ENCODE measurements at regions of chr10 and their contacts with region 1.

Region 1: GRCh38 chr10:100743626-100744135 is 1.7 kb upstream of the PAX2 start:
- DNase-seq: peak; percentile 82
- H3K4me3 Mint-ChIP-seq: no peak overlapping the region
- H3K27ac Mint-ChIP-seq: peak overlapping the region; percentile 41
- H3K4me1 Mint-ChIP-seq: peaks cover 16% of the 10 kb centered on the region
- H3K27me3 Mint-ChIP-seq: peaks cover 84% of the 10 kb centered on the region

Region 2: DNA sequence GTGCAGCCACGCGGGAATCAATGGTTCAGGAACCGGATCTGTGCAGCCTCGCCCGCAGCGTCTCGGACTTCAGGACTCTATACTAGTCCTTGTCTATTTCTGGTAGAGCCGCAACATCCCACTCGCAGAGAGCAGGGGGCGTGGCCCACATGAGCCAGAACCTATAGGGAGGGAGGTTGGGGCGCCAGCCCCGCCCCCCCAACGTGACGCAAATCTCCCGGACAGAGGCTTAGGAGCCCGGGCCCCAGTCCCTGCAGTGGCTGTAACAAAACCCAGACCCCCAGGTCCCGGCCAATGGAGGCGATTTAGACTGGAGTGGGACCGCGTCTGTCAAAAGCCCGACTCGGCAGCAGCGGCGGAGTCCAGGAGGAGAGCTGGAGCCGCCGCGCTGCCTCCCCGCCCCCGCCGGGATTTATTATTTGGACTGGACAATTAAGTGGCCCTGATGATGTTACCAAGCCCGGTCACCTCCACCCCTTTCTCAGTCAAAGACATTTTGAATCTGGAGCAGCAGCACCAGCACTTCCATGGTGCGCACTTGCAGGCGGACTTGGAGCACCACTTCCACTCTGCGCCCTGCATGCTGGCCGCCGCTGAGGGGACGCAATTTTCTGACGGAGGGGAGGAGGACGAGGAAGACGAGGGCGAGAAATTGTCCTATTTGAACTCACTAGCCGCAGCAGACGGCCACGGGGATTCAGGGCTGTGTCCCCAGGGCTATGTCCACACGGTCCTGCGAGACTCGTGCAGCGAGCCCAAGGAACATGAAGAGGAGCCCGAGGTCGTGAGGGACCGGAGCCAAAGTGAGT is 1210.8 kb before region 1 on chr10 and contains the start of gene NKX2-3:
- intact Hi-C with region 1: loop called (anchors 5 kb)
- DNase-seq: peak; percentile 71
- H3K4me3 Mint-ChIP-seq: peak within 1 kb of the TSS; percentile 21
- H3K27ac Mint-ChIP-seq: no peak within 1 kb of the TSS
- H3K4me1 Mint-ChIP-seq: peaks cover 24% of the 10 kb centered on the region
- H3K27me3 Mint-ChIP-seq: peaks cover 89% of the 10 kb centered on the region
- total RNA-seq, gene NKX2-3: not detected in 2 replicates

Region 3: DNA sequence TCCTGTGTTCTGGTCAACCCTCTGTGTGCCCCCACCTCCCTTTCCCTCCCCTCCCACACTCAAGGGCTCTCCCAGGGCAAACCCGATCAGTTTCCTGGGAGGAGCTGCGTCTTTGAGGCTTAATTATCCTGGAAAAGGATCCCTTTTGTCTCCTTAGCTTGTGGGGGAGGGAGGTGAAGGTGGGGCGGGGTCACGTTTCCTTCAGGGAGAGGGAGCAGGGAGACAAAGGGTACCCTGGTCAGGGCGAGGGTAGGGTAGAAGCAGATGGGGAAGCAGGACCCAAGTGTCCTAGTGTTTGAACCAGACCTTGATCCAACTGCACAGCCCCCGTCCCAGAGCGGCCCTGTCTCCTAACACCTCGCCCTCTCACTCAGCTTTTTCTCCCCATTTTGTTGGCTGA is 117.9 kb before region 1 on chr10:
- intact Hi-C with region 1: no loop called
- DNase-seq: no peak
- H3K4me3 Mint-ChIP-seq: no peak overlapping the region
- H3K27ac Mint-ChIP-seq: no peak overlapping the region
- H3K4me1 Mint-ChIP-seq: no peaks in the 10 kb centered on the region
- H3K27me3 Mint-ChIP-seq: peaks cover 41% of the 10 kb centered on the region

Region 4: GRCh38 chr10:100653957-100654781 is 89.5 kb before region 1 on chr10:
- intact Hi-C with region 1: loop called (anchors 2 kb)
- DNase-seq: peak; percentile 72
- H3K4me3 Mint-ChIP-seq: peak overlapping the region; percentile 77
- H3K27ac Mint-ChIP-seq: peak overlapping the region; percentile 22
- H3K4me1 Mint-ChIP-seq: peaks cover 27% of the 10 kb centered on the region
- H3K27me3 Mint-ChIP-seq: peaks cover 66% of the 10 kb centered on the region

Region 5: GRCh38 chr10:100710151-100710871 is 33.4 kb before region 1 on chr10:
- intact Hi-C with region 1: loop called (anchors 5 kb)
- DNase-seq: no peak
- H3K4me3 Mint-ChIP-seq: no peak overlapping the region
- H3K27ac Mint-ChIP-seq: no peak overlapping the region
- H3K4me1 Mint-ChIP-seq: peaks cover 5% of the 10 kb centered on the region
- H3K27me3 Mint-ChIP-seq: peaks cover 79% of the 10 kb centered on the region

Region 6: DNA sequence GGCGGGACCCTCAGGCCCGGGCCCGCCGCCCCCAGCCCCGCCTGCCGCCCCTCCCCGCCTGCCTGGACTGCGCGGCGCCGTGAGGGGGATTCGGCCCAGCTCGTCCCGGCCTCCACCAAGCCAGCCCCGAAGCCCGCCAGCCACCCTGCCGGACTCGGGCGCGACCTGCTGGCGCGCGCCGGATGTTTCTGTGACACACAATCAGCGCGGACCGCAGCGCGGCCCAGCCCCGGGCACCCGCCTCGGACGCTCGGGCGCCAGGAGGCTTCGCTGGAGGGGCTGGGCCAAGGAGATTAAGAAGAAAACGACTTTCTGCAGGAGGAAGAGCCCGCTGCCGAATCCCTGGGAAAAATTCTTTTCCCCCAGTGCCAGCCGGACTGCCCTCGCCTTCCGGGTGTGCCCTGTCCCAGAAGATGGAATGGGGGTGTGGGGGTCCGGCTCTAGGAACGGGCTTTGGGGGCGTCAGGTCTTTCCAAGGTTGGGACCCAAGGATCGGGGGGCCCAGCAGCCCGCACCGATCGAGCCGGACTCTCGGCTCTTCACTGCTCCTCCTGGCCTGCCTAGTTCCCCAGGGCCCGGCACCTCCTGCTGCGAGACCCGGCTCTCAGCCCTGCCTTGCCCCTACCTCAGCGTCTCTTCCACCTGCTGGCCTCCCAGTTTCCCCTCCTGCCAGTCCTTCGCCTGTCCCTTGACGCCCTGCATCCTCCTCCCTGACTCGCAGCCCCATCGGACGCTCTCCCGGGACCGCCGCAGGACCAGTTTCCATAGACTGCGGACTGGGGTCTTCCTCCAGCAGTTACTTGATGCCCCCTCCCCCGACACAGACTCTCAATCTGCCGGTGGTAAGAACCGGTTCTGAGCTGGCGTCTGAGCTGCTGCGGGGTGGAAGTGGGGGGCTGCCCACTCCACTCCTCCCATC is 84.4 kb after region 1 on chr10:
- intact Hi-C with region 1: loop called (anchors 5 kb)
- DNase-seq: peak; percentile 77
- H3K4me3 Mint-ChIP-seq: peak overlapping the region; percentile 85
- H3K27ac Mint-ChIP-seq: peak overlapping the region; percentile 52
- H3K4me1 Mint-ChIP-seq: peaks cover 24% of the 10 kb centered on the region
- H3K27me3 Mint-ChIP-seq: peaks cover 79% of the 10 kb centered on the region

Region 7: GRCh38 chr10:101161494-101162299 is 418.0 kb after region 1 on chr10:
- intact Hi-C with region 1: no loop called
- DNase-seq: peak; percentile 90
- H3K4me3 Mint-ChIP-seq: no peak overlapping the region
- H3K27ac Mint-ChIP-seq: no peak overlapping the region
- H3K4me1 Mint-ChIP-seq: peaks cover 14% of the 10 kb centered on the region
- H3K27me3 Mint-ChIP-seq: peaks cover 62% of the 10 kb centered on the region

Region 8: DNA sequence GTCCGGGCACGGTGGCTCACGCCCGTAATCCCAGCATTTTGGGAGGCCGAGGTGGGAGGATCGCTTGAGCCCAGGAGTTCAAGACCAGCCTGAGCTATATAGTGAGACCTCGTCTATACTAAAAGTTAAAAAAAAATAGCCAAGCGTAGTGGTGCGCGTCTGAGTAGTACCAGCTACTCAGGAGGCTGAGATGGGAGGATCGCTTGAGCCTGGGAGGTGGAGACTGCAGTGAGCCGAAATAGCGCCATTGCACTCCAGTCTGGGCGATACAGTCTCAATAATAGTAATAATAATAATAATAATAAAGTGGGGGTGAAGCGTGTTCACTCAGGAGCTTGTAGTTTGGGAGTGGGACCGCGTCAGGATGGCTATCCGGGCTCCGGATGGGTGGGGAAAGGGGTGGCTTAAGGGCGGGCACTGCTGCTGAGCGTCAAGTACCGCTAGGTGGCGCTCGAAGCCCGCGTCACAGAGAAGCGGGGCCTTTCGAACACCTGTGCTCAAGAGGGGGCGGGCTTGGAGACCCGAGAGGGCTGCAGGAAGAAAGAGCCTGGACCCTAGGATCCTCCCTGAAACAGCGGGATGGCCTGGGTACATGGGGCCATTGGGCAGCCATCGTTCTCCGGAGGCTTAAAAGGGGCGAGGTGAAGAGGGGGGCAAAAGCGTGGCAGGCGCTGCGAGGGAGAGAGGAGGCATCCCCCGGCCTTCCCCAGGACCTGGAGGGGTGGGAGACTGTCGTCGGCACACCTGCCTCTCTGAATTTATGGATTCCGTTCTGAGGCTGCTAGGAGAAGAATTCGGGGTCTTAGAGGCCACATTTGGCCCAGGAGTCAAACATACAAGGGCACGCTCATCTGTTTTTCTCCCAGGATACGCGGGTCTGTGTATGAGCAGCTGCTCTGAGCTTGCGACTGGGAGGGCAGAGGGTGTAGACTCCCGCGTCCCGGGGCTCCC is 471.0 kb after region 1 on chr10:
- intact Hi-C with region 1: loop called (anchors 5 kb)
- DNase-seq: peak; percentile 90
- H3K4me3 Mint-ChIP-seq: peak overlapping the region; percentile 59
- H3K27ac Mint-ChIP-seq: peak overlapping the region; percentile 69
- H3K4me1 Mint-ChIP-seq: peaks cover 18% of the 10 kb centered on the region
- H3K27me3 Mint-ChIP-seq: peaks cover 79% of the 10 kb centered on the region